GM10248 (cell line): ENCODE measurements at regions of chr4 and their contacts with region 1.

Region 1: GRCh38 chr4:143431526-143432257 is 81.8 kb upstream of the SMARCA5 start:
- DNase-seq: no peak
- CTCF ChIP-seq: no peak

Region 2: DNA sequence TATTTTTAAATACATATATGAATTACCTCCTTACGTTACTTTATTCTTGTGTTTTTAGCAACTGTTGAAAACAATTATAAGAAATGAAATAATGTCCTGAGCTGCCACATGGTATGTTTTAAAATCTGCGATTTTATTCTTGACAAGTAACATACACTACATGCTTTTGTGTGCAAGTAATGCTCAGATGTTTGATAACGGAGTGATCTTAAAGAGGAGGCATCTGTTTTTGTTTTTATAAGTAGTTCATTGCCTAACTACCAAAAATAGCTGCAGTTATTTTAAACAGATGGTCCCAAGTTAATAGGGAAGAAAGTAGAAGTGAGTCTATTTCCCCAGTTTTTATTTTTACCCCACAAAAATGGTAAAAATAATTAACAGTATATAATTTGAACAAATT is 39.8 kb before region 1 on chr4:
- CTCF ChIA-PET with region 1: no interaction called
- POLR2A ChIA-PET with region 1: no interaction called
- DNase-seq: no peak
- CTCF ChIP-seq: no peak

Region 3: DNA sequence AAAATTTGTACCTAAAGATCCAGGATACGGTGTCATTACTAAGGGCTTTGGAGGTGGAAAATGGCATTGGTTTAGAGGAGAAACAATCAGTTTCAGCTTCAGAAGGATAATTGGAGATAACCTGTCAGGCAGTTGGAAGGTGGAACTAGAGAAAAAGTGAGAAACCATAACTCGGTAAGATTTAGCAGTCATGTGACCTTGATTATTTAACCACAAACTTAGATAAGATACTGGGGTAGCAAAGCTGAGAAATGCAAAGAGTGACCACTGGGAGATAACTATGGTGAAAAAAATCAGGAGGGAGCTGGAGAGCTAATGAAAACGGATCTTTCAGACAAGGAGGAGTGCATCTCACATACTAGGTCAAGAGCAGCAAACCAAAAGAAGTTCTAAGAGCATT is 23.5 kb after region 1 on chr4:
- CTCF ChIA-PET with region 1: interaction called, 16 read pairs
- POLR2A ChIA-PET with region 1: no interaction called
- DNase-seq: no peak
- CTCF ChIP-seq: no peak